ENCODE measurements at regions of chr6 and their contacts with region 1.

Region 1: GRCh38 chr6:84764332-84765049 is at the start of gene TBX18:
- DNase-seq: no peak
- H3K4me3 Mint-ChIP-seq: peak within 1 kb of the TSS; percentile 0
- H3K27ac Mint-ChIP-seq: peak within 1 kb of the TSS; percentile 52
- H3K4me1 Mint-ChIP-seq: peaks cover 6% of the 10 kb centered on the region
- H3K27me3 Mint-ChIP-seq: peaks cover 58% of the 10 kb centered on the region
- total RNA-seq, gene TBX18: not detected in 2 replicates

Region 2: DNA sequence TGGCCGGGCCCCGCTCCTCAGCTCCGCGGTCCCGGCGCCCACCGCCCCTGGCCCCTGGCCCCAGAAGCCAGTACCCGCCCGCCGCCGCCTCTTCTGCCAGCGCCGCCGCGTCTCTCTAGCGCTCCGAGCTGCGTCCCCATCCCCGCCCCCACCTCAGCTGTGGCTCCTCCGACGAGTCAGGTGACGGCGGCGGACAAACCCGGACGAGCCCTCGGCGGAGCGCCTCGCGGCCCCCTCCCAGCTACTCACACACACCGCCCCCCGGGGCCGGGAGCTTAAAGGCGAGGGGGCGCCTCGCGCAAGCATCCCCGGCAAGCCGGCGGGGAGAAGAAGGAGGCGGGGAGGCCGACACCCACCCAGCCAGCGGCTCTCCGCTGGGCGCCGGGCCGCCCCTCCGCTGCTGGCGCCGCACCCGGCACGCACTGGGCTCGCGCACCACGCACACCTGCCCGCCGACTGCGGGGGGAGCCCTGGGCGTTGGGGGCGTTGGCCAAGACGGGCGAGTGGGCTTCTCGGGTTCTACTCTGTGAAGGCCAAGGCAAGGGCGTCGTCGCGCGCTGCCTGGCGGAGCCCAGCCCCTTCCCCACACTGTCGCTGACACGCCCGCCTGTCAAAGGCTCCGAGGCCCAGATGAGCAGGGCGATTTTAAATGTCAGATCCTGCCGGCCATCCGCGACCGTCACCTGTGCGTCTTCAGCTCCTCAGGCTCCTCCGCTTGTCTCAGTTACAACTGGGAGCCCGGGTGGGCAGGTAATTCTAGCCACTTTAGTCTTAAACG is 1055.3 kb before region 1 on chr6 and contains the start of gene SNAP91:
- intact Hi-C with region 1: loop called (anchors 10 kb)
- DNase-seq: no peak
- H3K4me3 Mint-ChIP-seq: no peak within 1 kb of the TSS
- H3K27ac Mint-ChIP-seq: no peak within 1 kb of the TSS
- H3K4me1 Mint-ChIP-seq: no peaks in the 10 kb centered on the region
- H3K27me3 Mint-ChIP-seq: peaks cover 36% of the 10 kb centered on the region
- total RNA-seq, gene SNAP91: not detected in 2 replicates

Region 3: GRCh38 chr6:83859410-83860358 is 904.8 kb before region 1 on chr6 and contains the start of gene CYB5R4:
- intact Hi-C with region 1: loop called (anchors 10 kb)
- DNase-seq: peak; percentile 91
- H3K4me3 Mint-ChIP-seq: peak within 1 kb of the TSS; percentile 99
- H3K27ac Mint-ChIP-seq: peak within 1 kb of the TSS; percentile 90
- H3K4me1 Mint-ChIP-seq: peaks cover 33% of the 10 kb centered on the region
- H3K27me3 Mint-ChIP-seq: peaks cover 11% of the 10 kb centered on the region
- total RNA-seq, gene CYB5R4: 24.5 and 25.3 TPM in 2 replicates

Region 4: DNA sequence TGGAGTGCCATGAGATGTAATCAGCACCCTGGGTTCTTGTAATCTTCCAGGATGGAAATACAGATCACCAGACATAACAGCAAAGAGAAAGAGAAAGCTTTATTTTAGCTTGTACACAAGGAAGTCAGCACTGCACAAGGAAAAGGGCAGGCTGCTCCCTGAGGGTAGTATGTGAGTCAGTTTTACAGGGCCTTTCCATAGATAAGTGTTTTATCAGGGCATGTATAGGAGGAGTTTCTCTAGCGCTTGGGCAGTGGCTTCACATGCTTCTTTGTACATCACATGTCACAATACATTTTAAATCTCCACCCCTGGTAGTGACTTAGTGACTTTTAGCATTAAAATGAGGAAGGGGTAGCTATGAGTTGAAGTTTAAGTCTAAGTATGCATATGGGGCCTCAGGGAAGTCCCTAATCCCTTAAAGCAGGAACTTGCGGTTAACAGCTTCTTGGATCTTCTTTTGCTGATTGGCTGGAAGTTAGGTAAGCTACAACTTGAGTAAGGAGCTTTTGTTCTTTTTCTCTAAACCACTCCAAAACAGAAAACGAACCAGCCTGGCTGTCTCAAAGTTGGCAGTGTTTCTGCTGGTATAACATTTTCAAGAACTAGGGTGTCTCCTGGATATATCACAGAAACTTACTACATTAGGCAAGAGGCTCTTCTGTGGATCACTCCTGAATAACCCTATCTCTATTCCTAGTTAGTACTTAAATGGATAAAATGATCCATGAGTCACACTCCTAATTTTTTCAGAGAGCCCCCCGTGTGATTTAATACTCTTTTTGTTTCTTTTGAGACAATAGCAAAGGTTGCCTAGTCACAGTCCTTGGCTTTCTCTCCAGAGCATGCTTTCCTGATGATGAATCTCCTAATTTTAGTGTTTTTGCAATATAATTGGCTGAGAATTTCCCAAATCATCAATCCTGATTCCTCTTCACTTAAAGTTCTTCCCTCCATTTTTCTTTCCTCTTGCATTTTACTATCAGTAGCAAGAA is 670.8 kb before region 1 on chr6:
- intact Hi-C with region 1: no loop called
- DNase-seq: no peak
- H3K4me3 Mint-ChIP-seq: no peak overlapping the region
- H3K27ac Mint-ChIP-seq: no peak overlapping the region
- H3K4me1 Mint-ChIP-seq: peaks cover 7% of the 10 kb centered on the region
- H3K27me3 Mint-ChIP-seq: peaks cover 2% of the 10 kb centered on the region

Region 5: DNA sequence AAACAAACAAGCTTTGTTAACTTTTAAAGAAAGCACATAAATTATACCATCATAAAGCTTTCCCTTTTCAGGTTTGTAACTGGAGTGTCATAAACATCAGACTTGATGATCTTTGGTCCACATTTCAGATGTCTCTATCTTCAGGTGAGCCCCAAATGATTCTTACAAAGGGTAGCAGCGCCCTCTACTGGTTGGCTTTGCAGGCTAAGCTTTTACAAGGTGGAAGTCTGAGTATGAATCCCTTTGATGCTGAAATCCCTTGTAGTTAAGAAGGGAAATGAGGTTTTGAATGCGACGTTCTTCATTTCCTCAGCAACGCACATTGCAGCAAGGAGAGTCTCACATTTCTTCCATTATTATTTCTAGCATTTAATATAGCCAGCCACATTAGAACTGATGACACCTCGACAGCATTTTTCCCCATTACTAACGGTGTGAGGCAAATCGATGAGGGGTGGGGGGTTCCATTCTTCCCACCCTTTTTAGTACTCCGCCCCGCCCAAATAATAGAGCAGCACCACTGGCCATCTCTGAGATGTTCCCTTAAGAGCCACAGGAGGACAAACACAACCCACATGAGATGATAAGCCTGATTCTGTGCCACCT is 559.0 kb after region 1 on chr6:
- intact Hi-C with region 1: loop called (anchors 10 kb)
- DNase-seq: peak; percentile 51
- H3K4me3 Mint-ChIP-seq: no peak overlapping the region
- H3K27ac Mint-ChIP-seq: no peak overlapping the region
- H3K4me1 Mint-ChIP-seq: no peaks in the 10 kb centered on the region
- H3K27me3 Mint-ChIP-seq: peaks cover 3% of the 10 kb centered on the region

Measured in activated T-helper 1 cell treated with anti-CD3 and anti-CD28 coated beads, Interleukin-12 subunit alpha, Interleukin-12 subunit beta, Interleukin-2, Interleukin-4 antibody, amounts not matched to agents 30 ng/mL and 10 ng/mL and 1 ng/mL, durations not matched to agents 14 hours and 24 hours and 36 hours (primary cell).